GM23248 (cell line): ENCODE measurements at regions of chr5 and their contacts with region 1.

Region 1: GRCh38 chr5:90409318-90410177 is at the start of gene CETN3:
- DNase-seq: peak; percentile 97
- H3K4me3 ChIP-seq: peak within 1 kb of the TSS; percentile 96
- H3K27ac ChIP-seq: peak within 1 kb of the TSS; percentile 93
- H3K4me1 ChIP-seq: peaks cover 35% of the 10 kb centered on the region
- H3K27me3 ChIP-seq: no peaks in the 10 kb centered on the region
- total RNA-seq, gene CETN3: 9.5 and 28.3 TPM in 2 replicates

Region 2: DNA sequence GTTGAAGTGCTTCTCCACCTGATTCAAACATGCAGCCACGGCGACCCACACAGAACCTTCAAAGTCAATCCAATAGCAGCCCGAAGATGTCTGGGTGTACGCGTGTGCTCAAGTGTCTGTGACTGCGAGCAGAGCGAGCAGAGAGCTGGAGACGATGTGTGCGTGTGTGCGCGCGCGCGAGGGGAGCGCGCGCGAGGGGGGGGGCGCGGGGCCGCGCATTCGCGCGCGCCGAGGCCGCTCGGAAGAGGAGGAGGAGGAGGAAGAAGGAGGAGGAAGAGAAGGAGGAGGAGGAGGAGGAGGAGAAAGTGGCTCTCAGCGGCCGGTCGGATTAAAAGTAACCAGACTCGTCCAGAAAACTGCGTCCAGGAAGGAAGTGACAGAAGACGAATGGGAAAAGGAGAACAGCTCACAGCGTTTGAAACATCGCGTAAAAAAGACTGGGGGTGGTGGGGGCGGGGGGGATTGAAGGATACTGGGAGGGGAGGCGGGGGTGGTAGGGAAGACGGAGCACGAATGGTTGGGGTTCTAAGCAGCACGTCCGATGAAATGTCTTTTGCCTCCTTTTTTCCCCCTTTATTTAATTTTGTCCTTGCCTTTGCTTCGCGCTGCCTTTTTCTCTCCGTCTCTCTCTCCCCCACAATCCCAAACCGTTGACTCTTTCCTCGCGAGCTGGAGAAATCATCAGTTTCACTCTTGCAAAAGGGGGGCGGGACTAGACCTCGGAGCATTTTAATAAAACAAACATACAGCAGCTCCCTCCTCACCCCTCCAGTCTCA is 1526.3 kb before region 1 on chr5 and contains the start of gene MEF2C:
- in situ Hi-C with region 1: loop called (anchors 25 kb)
- DNase-seq: peak; percentile 90
- H3K4me3 ChIP-seq: peak within 1 kb of the TSS; percentile 98
- H3K27ac ChIP-seq: peak within 1 kb of the TSS; percentile 74
- H3K4me1 ChIP-seq: peaks cover 31% of the 10 kb centered on the region
- H3K27me3 ChIP-seq: no peaks in the 10 kb centered on the region
- total RNA-seq, gene MEF2C: 3.4 TPM in 2 replicates

Region 3: DNA sequence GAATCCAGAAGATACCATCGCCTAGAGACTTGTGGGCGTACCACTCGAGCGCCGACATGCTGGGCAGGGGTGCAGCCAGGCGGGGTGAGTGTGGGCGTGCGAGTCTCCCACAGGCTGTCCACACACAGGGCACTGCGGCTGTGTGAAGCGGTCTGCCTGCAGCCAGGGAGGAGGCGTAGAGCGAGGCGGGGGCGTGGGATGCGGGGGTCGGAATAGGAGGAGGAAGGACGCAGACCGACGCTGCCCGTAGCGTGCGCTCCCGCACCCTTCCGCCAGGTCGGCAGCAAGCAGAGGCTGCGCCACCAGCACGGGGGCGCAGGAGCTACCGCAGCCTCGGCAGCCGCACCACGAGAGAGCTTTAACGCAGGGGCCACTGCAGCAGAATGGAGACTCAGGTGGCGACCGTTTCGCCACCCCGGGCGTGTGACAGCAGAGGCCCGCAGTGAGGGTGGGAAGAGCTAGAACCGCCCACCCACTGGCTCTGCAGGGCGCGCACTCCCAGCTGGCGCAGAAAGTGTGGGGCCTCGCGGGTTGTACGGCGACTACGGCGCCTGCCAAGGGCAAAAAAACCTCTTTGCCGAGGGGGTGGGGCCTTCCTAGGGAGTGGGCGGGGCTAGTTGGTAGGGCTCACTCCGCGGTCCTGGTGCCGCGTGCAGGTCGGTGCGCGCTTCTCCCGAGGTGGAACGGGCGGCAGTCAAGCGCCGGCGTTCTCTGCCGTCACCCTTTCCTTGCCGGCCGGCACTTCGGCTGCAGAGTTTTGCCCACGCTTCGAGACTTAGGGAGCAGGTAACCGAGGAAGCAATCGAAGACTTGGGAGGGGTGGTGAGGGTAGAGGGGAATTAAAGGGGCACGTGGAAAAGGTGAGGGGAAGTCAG is 64.9 kb after region 1 on chr5 and contains the starts of genes MBLAC2 and POLR3G:
- in situ Hi-C with region 1: no loop called
- DNase-seq: peak; percentile 97
- H3K4me3 ChIP-seq: peak within 1 kb of the TSS; percentile 88
- H3K27ac ChIP-seq: peak within 1 kb of the TSS; percentile 21
- H3K4me1 ChIP-seq: peaks cover 9% of the 10 kb centered on the region
- H3K27me3 ChIP-seq: no peaks in the 10 kb centered on the region
- total RNA-seq, gene MBLAC2: 3.7 and 4.8 TPM in 2 replicates
- total RNA-seq, gene POLR3G: 1.5 and 8.8 TPM in 2 replicates